ENCODE measurements at regions of chr3 and their contacts with region 1.

Region 1: GRCh38 chr3:14203521-14204079 is 25.0 kb downstream of the LSM3 start:
- DNase-seq: peak; percentile 77
- H3K4me3 ChIP-seq: no peak overlapping the region
- H3K27ac ChIP-seq: no peak overlapping the region
- H3K27me3 ChIP-seq: no peaks in the 10 kb centered on the region
- CTCF ChIP-seq: peak; percentile 91

Region 2: DNA sequence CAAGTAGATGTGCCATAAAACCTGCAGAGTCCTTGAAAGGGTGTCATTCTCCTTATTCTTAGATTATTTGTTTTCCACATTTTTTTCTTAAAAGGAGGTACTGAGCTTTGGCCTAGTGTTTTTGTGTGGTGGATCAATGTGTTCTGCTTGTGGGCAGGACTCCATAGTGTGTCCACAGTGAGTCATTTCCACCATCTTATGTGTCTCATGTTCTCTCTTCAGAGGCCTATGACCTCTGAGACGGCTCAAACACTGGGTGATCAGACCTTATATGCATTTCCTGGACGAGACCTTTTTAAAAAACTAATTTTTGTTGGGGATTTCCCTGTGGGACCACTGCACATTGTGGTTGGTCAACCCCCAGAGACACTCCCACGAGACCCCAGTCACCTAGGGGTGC is 172.3 kb before region 1 on chr3:
- CTCF ChIA-PET with region 1: no interaction called
- POLR2A ChIA-PET with region 1: no interaction called
- DNase-seq: no peak
- H3K4me3 ChIP-seq: no peak overlapping the region
- H3K27ac ChIP-seq: no peak overlapping the region
- H3K27me3 ChIP-seq: no peaks in the 10 kb centered on the region
- CTCF ChIP-seq: no peak

Region 3: DNA sequence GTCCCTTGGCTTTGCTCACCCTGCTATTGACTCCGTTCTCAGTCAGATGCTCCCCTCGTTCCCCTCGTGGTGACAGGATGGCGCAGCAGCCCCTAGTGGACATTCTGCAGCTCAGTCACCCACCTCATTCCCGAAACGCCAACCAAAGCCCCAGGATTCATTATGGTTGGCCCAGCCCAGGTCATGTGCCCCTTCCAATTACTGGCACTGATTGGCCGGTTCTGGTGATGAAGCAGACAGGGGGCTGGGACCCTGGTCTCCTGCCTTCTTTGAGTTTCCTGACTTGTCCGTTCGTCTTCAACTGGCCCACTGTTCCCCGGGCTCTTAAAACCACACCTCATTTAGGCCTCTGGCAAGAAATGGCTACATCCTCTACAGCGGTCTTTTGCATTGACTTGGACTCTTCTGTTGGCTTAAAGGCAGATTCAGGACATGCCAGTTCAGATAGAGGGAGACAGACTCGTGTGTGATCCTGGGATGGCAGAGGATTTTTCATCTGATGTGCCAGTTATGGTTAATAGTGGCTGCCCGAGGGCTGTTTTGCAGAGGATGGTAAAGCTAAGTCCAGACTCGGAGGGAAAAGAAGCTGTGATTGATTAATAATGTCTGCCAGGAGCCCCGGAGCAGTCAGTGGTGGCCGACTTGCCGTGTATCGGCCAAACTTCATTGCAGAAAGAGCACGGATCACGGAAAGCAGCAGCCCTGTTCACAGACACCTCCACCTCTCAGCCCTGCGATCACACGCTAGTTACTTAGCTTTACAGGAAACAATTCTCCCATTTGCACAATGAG is 12.9 kb after region 1 on chr3:
- CTCF ChIA-PET with region 1: interaction called, 42 read pairs
- POLR2A ChIA-PET with region 1: interaction called, 5 read pairs
- DNase-seq: no peak
- H3K4me3 ChIP-seq: no peak overlapping the region
- H3K27ac ChIP-seq: no peak overlapping the region
- H3K27me3 ChIP-seq: no peaks in the 10 kb centered on the region
- CTCF ChIP-seq: peak; percentile 20; the same call in 1 of the 2 replicates

Region 4: DNA sequence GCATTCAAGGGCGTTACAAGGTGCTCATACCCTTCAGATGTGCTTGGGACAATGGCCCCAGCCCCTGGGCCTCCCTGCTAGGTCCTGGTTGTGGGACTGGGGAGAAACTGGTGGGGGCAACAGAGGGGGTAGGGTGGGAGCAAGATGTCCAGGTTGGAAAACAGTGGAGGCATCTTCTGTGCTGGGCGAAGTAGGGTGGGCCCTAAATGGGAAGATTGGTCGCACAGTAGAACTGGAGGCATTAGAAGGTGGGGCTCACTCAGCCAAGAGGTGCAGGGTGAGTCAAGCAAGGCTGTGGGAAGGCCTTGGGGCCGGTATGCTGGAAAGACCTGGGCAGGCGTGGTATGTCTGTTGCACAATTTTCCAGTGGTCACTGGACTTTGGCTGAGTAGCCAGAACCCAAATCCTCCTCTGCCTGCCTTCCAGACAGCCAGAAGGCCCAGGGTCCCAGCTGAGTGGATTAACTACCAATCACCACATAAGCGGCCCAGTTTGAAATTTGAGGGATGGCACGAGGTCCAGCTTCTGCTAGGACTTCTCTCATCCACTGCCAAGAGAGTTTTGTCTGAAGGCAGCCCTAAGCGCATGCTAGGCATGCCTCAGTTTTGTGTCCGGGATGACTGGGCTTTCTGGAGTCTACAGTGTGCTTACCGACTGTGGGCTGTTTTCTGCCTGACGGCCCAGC is 49.6 kb after region 1 on chr3:
- CTCF ChIA-PET with region 1: interaction called, 112 read pairs
- POLR2A ChIA-PET with region 1: no interaction called
- DNase-seq: no peak
- H3K4me3 ChIP-seq: no peak overlapping the region
- H3K27ac ChIP-seq: no peak overlapping the region
- H3K27me3 ChIP-seq: no peaks in the 10 kb centered on the region
- CTCF ChIP-seq: no peak

Region 5: DNA sequence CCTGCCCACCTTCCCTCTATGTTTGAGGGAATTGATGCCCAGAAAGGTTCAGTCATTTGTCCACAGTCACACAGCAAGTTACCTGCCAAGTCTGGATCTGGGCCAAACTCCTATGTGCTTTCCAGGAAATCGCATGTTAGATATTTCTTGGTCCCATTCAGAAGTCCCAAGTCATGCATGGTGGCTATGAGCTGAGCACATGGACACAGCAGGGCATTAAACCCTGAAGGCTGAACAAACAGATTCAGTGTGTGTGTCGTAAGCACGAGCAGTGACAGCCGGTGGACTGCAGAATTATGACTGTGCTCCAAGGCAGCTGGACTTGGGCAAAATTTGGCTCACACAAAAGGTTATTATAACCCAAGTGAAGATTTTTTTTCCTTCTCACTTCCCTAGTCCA is 187.4 kb after region 1 on chr3:
- CTCF ChIA-PET with region 1: interaction called, 13 read pairs
- POLR2A ChIA-PET with region 1: no interaction called
- DNase-seq: peak; percentile 57
- H3K4me3 ChIP-seq: no peak overlapping the region
- H3K27ac ChIP-seq: no peak overlapping the region
- H3K27me3 ChIP-seq: peaks cover 3% of the 10 kb centered on the region
- CTCF ChIP-seq: no peak

Region 6: DNA sequence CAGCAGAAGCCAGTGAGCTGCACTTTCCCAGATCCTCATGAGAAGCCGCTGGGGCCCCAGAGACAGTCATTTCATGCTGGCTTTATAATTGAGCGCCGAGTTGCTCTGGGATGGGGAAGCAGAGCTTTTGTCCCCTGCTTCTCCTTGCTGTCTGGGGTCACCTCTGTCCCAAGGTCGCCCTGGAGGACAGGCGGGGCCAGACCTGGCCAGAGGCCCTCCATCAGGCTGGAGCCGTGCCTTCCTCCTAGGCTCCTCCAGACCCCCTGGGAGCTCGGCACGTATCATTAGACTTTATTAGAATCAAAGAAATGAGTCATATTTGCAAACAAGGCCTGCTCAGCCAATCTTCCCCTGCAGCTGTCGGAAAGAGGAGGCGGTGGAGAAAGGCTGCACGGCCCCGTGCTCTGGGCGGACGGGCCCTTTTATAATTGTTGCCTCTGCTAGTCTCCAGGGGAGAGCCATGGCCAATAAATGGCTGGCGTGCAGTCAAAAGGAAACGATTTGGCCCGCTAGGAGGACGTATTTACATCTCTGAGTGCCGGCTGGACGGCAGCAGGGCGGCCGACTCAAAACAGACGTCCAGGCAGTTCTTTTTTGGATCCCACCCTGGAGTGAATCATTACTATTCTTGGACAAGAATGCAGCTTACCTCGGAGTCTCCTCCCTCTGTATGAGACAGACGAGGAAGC is 249.2 kb after region 1 on chr3:
- CTCF ChIA-PET with region 1: interaction called, 49 read pairs
- POLR2A ChIA-PET with region 1: interaction called, 3 read pairs
- DNase-seq: peak; percentile 96
- H3K4me3 ChIP-seq: peak overlapping the region; percentile 32
- H3K27ac ChIP-seq: peak overlapping the region; percentile 100
- H3K27me3 ChIP-seq: no peaks in the 10 kb centered on the region
- CTCF ChIP-seq: peak; percentile 30

Region 7: DNA sequence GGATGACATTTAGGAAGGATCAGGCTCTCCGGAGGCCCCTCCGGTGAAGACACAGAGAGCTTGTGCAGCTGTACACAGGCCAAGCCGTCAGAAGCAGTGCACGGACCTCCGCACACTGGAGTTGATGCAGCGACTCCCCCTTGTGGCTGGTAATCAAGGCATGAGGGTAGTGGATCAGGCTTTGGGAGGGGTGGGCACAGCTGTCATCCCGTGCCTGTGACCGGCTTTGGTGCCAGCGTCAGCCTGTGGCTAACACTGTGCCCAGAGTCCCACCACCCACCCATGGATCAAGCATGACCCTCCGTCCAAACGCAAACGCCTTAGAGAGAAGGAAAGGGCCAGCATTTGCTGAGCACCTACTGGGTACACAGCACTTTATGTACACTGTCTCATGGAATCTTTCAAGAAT is 344.7 kb after region 1 on chr3:
- CTCF ChIA-PET with region 1: interaction called, 53 read pairs
- POLR2A ChIA-PET with region 1: no interaction called
- DNase-seq: peak; percentile 33
- H3K4me3 ChIP-seq: no peak overlapping the region
- H3K27ac ChIP-seq: no peak overlapping the region
- H3K27me3 ChIP-seq: peaks cover 11% of the 10 kb centered on the region
- CTCF ChIP-seq: peak; percentile 80

Measured in AG04450 (cell line).